HepG2 (cell line): ENCODE measurements at regions of chr1 and their contacts with region 1.

Region 1: GRCh38 chr1:64686828-64687724 is 57.8 kb upstream of the RAVER2 start:
- DNase-seq: peak; percentile 37
- ATAC-seq: peak; percentile 79
- H3K4me3 ChIP-seq: no peak overlapping the region
- H3K27ac ChIP-seq: no peak overlapping the region
- H3K4me1 ChIP-seq: no peaks in the 10 kb centered on the region
- H3K27me3 ChIP-seq: peaks cover 0 to 8% of the 10 kb centered on the region in 2 experiments; a peak in 2 of 5 replicates
- CTCF ChIP-seq: peak; percentile 69
- EP300 ChIP-seq: no peak
- POLR2A ChIP-seq: no peak
- RAD21 ChIP-seq: peak; percentile 41

Region 2: DNA sequence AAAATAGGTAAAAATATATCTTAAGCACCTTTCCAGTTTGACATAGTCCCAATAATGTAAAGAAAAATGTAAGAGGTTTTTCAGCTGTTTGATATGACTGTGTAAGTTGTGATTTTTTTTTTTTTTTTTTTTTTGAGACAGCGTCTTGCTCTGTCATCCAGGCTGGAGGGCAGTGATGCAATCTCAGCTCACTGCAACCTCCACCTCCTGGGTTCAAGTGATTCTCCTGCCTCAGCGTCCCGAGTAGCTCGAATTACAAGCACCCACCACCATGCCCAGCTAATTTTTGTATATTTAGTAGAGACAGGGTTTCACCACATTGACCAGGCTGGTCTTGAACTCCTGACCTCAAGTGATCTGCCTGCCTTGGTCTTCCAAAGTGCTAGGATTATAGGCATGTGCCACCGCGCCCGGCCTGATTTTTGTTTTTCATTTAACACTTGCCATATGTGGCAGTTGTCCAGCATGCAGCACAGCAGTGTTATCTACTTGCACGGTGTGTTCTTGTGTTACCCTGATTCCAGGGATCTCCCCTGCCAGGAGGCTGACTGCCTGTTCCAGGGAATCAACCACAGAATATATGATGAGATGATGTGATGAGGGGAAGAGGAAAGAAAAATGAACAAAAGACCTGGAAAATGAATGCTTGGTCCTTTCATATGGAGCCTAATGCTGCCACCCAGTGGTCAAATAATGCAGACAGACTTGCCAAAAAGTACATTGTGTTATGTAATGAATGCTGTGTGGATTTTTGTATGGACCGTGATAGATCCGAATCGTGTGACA is 136.8 kb after region 1 on chr1:
- CTCF ChIA-PET with region 1: interaction called, 19 read pairs
- POLR2A ChIA-PET with region 1: no interaction called
- in situ Hi-C with region 1: loop called (anchors 5 kb)
- intact Hi-C with region 1: loop called (anchors 1 kb)
- DNase-seq: peak; percentile 69
- ATAC-seq: peak; percentile 65
- H3K4me3 ChIP-seq: no peak overlapping the region
- H3K27ac ChIP-seq: no peak overlapping the region
- H3K4me1 ChIP-seq: peaks cover 9% of the 10 kb centered on the region
- H3K27me3 ChIP-seq: no peaks in the 10 kb centered on the region
- CTCF ChIP-seq: peak; percentile 89
- EP300 ChIP-seq: no peak
- POLR2A ChIP-seq: no peak
- RAD21 ChIP-seq: peak; percentile 81